ENCODE measurements at regions of chr13 and their contacts with region 1.

Region 1: DNA sequence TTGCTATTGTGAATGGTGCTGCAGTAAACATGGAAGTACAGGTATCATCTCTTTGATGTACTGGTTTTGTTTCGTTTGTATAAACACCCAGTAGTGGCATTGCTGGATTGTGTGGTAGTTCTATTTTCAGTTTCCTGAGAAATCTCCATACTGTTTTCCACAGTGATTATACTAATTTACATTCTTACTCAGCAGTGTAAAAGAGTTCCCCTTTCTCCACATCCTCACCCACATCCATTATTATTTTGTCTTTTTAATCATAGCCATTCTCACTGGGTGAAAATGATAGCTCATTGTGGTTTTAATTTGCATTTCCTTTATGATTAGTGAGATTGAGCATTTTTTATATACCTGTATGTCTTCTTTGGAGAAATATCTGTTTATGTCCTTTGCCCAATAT is 62.3 kb upstream of the PARP4 start:
- DNase-seq: no peak
- H3K4me3 ChIP-seq: no peak overlapping the region
- H3K27ac ChIP-seq: no peak overlapping the region
- H3K4me1 ChIP-seq: no peaks in the 10 kb centered on the region
- H3K27me3 ChIP-seq: no peaks in the 10 kb centered on the region
- CTCF ChIP-seq: no peak
- EP300 ChIP-seq: no peak
- POLR2A ChIP-seq: no peak

Region 2: GRCh38 chr13:24671386-24672107 is 96.7 kb after region 1 on chr13:
- intact Hi-C with region 1: loop called (anchors 2 kb)
- DNase-seq: peak; percentile 86
- H3K4me3 ChIP-seq: peak overlapping the region in 2 of 4 donors; percentile 27 to 32
- H3K27ac ChIP-seq: peak overlapping the region; percentile 61 to 78 (median 72)
- H3K4me1 ChIP-seq: peaks cover 0 to 22% (median 17%) of the 10 kb centered on the region in 4 donors
- H3K27me3 ChIP-seq: no peaks in the 10 kb centered on the region
- CTCF ChIP-seq: peak in 3 of 4 experiments; percentile 53 to 57 (median 56)
- EP300 ChIP-seq: no peak
- POLR2A ChIP-seq: no peak

Measured in sigmoid colon (tissue), 7 donors.